ENCODE measurements at regions of chr12 and their contacts with region 1.

Region 1: DNA sequence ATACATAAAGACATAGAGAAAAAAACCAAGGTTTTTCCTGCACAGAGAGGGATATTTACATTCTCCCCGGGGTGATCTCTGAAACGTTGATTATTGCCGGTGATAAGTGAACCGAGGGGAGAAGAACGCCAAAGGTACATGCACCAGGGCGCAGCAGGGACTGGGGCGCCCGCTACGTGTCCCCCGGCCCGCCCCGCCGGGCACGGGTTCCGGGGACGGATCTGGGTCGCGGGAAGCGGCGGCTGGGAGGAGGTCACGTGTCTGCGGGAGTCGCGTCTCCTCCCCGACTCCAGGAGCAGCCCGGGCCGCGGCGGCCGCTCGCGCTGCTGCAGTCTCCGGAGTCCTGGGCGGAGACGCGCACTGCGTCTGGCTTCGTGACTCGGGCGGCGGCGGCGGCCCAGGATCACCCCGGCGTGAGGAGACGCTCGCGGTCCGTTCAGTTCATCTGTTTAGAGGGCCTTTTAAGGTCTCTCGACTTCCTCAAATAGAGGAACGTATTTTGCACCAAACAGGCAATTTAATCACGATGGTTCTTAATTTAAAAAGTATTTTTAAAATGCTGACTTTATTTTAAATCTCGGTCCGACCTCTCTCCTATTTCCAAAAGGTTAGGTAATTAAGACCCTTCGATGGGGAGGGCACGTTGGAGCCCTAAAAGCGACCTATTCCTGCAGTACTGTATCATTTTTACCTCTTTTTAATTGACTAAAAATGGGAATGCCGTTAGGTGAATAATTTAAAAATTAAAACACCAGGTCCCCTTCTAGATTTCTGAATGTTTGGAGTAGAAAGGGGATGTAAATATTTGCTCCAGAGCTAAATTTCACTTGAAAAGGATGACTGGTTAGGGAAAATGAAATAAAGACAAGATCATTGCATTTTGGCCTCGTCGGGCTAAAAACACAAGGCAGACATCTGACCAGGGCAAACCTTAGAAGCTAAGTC is 1.8 kb upstream of the BHLHE41 start:
- DNase-seq: peak; percentile 82 to 85 (median 84)
- H3K4me3 ChIP-seq: peak overlapping the region; percentile 48
- H3K27ac ChIP-seq: peak overlapping the region; percentile 52 to 94
- H3K4me1 ChIP-seq: peaks cover 5% of the 10 kb centered on the region
- H3K27me3 ChIP-seq: no peaks in the 10 kb centered on the region
- CTCF ChIP-seq: no peak
- EP300 ChIP-seq: no peak
- POLR2A ChIP-seq: peak; percentile 13

Region 2: DNA sequence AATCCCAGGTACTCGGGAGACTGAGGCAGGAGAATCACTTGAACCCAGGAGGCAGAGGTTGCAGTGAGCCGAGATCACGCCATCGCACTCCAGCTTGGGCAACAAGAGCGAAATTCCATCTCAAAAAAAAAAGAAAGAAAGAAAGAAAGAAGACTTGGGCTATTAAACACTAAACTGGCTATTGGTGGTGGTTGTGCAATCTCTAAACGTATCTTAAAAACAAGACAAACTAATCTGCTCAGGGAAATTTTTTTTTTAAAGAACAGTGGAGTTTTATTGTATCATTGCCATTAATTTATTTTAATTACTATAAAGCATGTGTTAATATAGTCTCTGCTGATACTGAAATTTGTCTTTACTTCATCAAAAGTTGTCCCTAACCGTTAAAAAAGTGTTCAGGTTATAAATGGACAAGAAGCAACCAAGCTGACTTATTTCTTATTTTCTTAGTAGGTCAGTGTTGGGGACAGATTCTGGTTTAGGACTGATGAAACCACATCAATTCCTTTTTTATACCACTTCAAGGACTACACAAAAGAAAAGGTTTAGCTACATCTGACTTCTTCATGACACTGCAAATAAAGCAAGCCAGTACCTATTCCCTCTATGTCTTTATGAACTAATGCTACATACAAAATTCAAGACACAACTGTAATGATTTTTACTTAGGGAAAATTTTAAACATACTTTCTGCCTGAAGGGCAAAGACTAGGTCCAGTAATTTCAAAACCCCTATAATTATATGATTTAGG is 807.2 kb before region 1 on chr12:
- intact Hi-C with region 1: no loop called
- DNase-seq: no peak
- H3K4me3 ChIP-seq: no peak overlapping the region
- H3K27ac ChIP-seq: no peak overlapping the region
- H3K4me1 ChIP-seq: no peaks in the 10 kb centered on the region
- H3K27me3 ChIP-seq: no peaks in the 10 kb centered on the region
- CTCF ChIP-seq: no peak
- EP300 ChIP-seq: no peak
- POLR2A ChIP-seq: no peak

Region 3: DNA sequence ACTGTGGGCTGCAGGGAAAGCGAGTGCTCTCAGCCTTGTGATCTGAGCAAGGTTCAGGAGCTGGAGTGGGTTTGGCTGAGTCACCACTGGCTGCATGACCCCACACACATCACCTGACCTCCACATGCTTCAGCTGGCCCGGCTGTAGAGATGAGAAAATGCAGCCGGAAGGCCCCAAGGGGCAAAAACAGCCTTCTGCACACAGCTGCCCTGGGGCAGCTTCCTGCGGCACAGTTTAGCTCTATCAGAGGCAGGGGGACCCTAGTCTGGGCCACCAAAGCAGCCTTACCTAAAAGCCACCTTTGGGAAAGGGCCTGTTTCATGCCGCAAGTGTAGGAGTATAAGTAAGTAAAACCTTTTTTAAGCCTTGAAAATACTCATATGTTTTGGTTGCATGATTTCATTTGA is 192.1 kb after region 1 on chr12:
- intact Hi-C with region 1: loop called in 1 of 4 experiments (anchors 5 kb)
- DNase-seq: peak; percentile 75 to 83 (median 79)
- H3K4me3 ChIP-seq: no peak overlapping the region
- H3K27ac ChIP-seq: peak overlapping the region in 1 of 2 donors; percentile 36
- H3K4me1 ChIP-seq: peaks cover 11% of the 10 kb centered on the region
- H3K27me3 ChIP-seq: no peaks in the 10 kb centered on the region
- CTCF ChIP-seq: no peak
- EP300 ChIP-seq: no peak
- POLR2A ChIP-seq: no peak

Region 4: DNA sequence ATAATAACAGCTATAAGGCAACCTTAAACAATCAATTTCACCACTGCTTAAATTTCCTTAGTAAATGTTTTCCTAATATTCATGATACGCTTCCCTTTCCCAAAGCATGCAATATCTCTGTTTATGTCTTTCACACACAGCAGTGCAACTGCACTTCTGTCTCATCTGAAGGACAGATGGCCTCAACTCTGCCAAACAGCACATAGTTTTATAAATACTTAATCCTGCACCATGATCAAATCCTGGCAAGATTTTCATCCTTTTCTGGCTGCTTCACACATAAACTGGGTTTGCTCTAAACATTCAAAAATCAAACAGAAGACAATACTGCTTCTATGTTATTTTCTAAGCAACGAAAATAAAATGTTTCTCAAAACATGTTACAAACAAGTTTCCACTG is 440.1 kb after region 1 on chr12:
- intact Hi-C with region 1: no loop called
- DNase-seq: no peak
- H3K4me3 ChIP-seq: no peak overlapping the region
- H3K27ac ChIP-seq: peak overlapping the region in 1 of 2 donors; percentile 72
- H3K4me1 ChIP-seq: no peaks in the 10 kb centered on the region
- H3K27me3 ChIP-seq: no peaks in the 10 kb centered on the region
- CTCF ChIP-seq: no peak
- EP300 ChIP-seq: no peak
- POLR2A ChIP-seq: no peak

Region 5: DNA sequence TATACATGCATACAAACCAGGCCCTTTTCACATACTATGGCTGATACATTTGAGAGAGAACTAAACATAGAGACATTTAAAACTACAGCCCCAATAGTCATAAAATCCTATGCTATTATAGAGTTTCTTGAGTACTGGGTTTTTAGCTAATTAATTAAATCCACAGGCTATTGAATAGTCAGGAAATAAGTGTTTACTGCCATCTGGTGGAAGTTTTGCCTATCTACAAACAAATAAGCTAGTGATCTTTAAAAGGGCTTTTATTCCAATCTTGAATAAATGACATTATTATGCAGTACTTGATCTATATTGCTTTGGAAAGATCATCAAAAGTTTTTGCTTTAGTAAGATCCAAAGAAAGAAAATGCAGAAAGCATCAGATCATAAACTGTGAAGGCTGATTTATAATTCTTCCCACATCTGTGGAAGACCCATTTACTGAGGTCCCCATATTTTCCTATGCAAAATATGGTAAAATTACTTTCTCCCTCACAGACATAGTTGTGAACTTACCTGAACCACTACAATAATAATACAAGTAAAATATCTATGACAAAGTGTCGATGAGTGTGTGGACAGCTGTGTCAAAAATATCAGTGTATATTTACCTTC is 575.1 kb after region 1 on chr12:
- intact Hi-C with region 1: loop called in 1 of 4 experiments (anchors 10 kb)
- DNase-seq: no peak
- H3K4me3 ChIP-seq: no peak overlapping the region
- H3K27ac ChIP-seq: no peak overlapping the region
- H3K4me1 ChIP-seq: peaks cover 3% of the 10 kb centered on the region
- H3K27me3 ChIP-seq: no peaks in the 10 kb centered on the region
- CTCF ChIP-seq: peak in 2 of 3 donors; percentile 11 to 40
- EP300 ChIP-seq: no peak
- POLR2A ChIP-seq: no peak

Measured in ovary (tissue), 10 donors.